Naive thymus-derived CD4-positive, alpha-beta T cell (primary cell): ENCODE measurements at regions of chr14 and their contacts with region 1.

Region 1: DNA sequence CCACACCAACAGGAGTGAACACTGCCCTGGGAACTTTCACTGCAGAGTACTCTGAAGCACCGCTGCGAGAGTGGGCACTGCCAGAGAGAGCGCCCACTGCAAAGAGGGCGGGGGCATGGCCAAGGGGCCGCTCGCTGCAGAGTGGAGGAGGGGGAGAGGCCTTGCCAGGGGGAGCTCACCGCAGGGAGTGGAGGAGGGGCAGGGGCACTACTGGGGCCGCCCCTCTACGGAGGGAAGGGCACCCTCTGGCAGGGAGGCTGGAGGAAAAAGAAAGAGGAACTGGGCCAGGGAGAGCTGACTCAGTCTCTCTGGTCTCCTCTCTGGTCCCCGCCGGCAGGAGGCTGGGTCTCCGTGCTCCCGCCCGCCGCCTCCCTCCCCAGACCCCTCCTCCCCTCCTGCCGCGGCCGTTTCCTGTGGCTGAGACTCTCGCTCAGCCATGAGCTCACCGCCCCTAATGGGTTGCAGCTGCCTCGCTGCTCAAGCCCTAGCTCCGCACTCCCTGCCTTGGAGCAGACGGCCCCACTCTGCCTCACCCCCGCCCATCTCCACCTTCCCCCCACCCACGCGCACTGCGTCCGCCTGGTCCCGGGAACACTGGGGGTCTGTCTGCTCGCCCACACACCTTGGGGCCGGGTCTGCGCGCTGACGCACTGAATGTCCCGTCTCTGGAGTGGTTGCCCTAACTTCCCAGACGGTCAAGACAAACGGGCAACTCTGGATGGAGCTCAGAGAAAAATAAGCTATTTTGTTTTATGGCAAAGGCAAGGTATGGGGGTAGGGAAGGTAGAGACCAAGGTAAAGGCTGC is 1.3 kb downstream of the ARHGEF40 start:
- DNase-seq: peak in 1 of 9 donors; percentile 36
- ATAC-seq: peak; percentile 63
- H3K4me3 ChIP-seq: peak overlapping the region; percentile 43
- H3K4me3 Mint-ChIP-seq: peak overlapping the region; percentile 69 to 90 (median 82)
- H3K27ac ChIP-seq: no peak overlapping the region
- H3K27ac Mint-ChIP-seq: peak overlapping the region in 5 of 9 donors; percentile 51 to 76 (median 54)
- H3K4me1 ChIP-seq: peaks cover 21 to 29% of the 10 kb centered on the region in 2 donors
- H3K4me1 Mint-ChIP-seq: peaks cover 23 to 40% (median 35%) of the 10 kb centered on the region in 7 donors
- H3K27me3 ChIP-seq: peaks cover 20 to 36% of the 10 kb centered on the region in 2 donors
- H3K27me3 Mint-ChIP-seq: peaks cover 51 to 69% (median 61%) of the 10 kb centered on the region in 5 donors

Region 2: GRCh38 chr14:20989572-20990551 is 81.6 kb before region 1 on chr14 and contains the start of gene METTL17:
- CTCF ChIA-PET with region 1: no interaction called
- POLR2A ChIA-PET with region 1: no interaction called
- intact Hi-C with region 1: no loop called
- DNase-seq: peak; percentile 64 to 88 (median 81)
- ATAC-seq: peak; percentile 95
- H3K4me3 ChIP-seq: peak within 1 kb of the TSS; percentile 86
- H3K4me3 Mint-ChIP-seq: peak within 1 kb of the TSS; percentile 86 to 97 (median 92)
- H3K27ac ChIP-seq: peak within 1 kb of the TSS; percentile 77
- H3K27ac Mint-ChIP-seq: peak within 1 kb of the TSS; percentile 86 to 98 (median 95)
- H3K4me1 ChIP-seq: peaks cover 12 to 16% of the 10 kb centered on the region in 2 donors
- H3K4me1 Mint-ChIP-seq: peaks cover 0 to 46% (median 37%) of the 10 kb centered on the region in 7 donors
- H3K27me3 ChIP-seq: no peaks in the 10 kb centered on the region
- H3K27me3 Mint-ChIP-seq: no peaks in the 10 kb centered on the region
- total RNA-seq, gene METTL17: 75.4 to 129 (median 96.7) TPM

Region 3: DNA sequence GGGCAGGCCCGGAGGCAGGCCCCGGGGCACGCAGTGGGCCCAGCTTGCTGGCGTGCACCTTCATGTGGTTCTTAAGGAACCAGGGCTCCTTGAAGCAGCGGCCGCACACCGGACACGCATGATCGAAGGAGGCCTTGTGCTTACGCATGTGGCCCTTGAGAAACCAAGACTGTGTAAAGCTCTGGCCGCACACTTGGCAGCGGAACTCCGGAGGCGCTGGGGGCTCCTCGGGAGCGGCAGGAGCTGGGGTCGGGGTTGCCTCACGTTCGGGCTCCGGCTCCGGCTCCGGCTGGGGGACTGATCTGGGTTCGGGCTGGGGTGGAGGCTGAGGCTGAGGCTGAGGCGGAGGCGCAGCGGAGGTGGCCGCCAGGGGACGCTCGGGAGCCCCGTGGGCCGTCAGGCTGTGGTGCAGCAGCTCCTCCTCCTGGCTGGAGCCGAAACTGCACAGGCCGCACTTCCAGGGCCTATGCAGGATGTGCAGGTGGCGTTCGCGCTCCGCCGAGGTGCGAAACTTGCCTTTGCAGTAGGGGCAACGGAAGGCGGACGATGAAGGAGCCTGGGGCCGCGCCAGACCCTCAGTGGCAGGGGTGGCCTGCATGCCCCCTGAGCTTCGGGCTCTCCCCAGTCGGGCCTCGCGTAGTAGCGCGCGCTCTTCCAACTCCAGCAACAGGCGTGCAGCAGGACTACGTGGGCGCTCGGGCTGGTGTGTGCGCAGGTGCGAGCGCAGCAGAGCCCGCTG is 21.0 kb after region 1 on chr14:
- CTCF ChIA-PET with region 1: interaction called, 8 read pairs
- POLR2A ChIA-PET with region 1: interaction called, 5 read pairs
- intact Hi-C with region 1: loop called (anchors 1 kb)
- DNase-seq: peak; percentile 82 to 98 (median 93)
- ATAC-seq: peak; percentile 90
- H3K4me3 ChIP-seq: no peak overlapping the region
- H3K4me3 Mint-ChIP-seq: peak overlapping the region in 1 of 10 donors; percentile 6
- H3K27ac ChIP-seq: no peak overlapping the region
- H3K27ac Mint-ChIP-seq: peak overlapping the region in 8 of 9 donors; percentile 17 to 88 (median 78)
- H3K4me1 ChIP-seq: peaks cover 6 to 14% of the 10 kb centered on the region in 2 donors
- H3K4me1 Mint-ChIP-seq: peaks cover 15 to 37% (median 27%) of the 10 kb centered on the region in 7 donors
- H3K27me3 ChIP-seq: no peaks in the 10 kb centered on the region
- H3K27me3 Mint-ChIP-seq: peaks cover 0 to 17% (median 0%) of the 10 kb centered on the region in 5 donors

Region 4: DNA sequence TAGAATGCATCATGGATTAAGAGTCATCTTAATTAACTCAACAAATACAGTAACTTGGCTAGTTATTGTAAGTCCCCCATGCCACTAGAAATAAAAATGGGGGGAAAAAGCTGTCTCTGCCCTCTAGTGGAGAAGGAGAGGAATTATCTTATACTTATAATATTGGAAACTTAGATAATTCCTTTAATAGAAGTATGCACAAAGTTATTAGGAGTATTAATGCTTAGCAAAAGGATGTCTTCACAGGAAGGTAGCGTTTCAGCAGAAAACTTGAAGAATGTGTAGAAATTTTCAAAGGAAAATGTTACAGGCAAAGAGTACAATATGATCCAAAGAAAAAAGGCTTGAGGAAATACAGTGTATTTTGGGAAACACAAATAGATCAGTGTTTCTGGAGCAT is 64.6 kb after region 1 on chr14:
- CTCF ChIA-PET with region 1: no interaction called
- POLR2A ChIA-PET with region 1: no interaction called
- intact Hi-C with region 1: loop called in 1 of 2 experiments (anchors 2 kb)
- DNase-seq: peak in 5 of 9 donors; percentile 1 to 22 (median 14)
- ATAC-seq: no peak
- H3K4me3 ChIP-seq: no peak overlapping the region
- H3K4me3 Mint-ChIP-seq: no peak overlapping the region
- H3K27ac ChIP-seq: no peak overlapping the region
- H3K27ac Mint-ChIP-seq: no peak overlapping the region
- H3K4me1 ChIP-seq: no peaks in the 10 kb centered on the region
- H3K4me1 Mint-ChIP-seq: no peaks in the 10 kb centered on the region
- H3K27me3 ChIP-seq: no peaks in the 10 kb centered on the region
- H3K27me3 Mint-ChIP-seq: peaks cover 0 to 8% (median 0%) of the 10 kb centered on the region in 5 donors

Region 5: DNA sequence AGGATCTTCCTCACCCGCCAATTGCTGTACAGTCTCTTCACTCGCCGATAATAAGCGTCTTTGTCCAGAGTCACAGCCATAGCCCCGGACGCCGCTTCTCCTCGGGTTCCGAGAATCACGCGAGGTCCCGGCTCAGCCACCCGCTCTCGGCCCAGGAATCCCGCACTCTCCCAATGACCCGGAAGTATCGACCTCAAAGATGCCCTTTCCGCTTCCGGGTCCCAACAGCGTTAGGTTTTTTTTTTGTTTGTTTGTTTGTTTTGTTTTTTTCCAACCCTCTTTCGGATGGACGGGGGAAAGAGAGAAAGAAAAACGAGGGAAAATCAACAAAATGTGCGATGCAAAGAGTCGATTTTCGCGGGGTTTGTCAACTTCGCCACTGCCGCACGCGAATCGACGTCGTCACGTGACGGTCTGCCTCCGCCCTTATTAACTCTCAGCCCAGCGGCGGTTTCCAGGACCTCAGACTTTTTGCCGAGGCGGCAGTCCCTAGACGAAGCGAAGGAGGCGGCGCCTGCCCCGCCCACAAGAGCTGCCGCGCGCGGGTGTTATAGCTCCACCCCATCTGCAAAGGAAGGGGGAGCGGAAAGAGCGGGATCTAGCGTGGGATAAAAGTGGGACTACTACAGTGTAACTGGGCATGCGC is 312.5 kb after region 1 on chr14 and contains the start of gene SUPT16H:
- CTCF ChIA-PET with region 1: no interaction called
- POLR2A ChIA-PET with region 1: no interaction called
- intact Hi-C with region 1: no loop called
- DNase-seq: peak; percentile 78 to 91 (median 86)
- ATAC-seq: peak; percentile 97
- H3K4me3 ChIP-seq: peak within 1 kb of the TSS; percentile 98
- H3K4me3 Mint-ChIP-seq: peak within 1 kb of the TSS; percentile 92 to 99 (median 97)
- H3K27ac ChIP-seq: peak within 1 kb of the TSS; percentile 87
- H3K27ac Mint-ChIP-seq: peak within 1 kb of the TSS; percentile 97 to 100 (median 99)
- H3K4me1 ChIP-seq: peaks cover 3 to 11% of the 10 kb centered on the region in 2 donors
- H3K4me1 Mint-ChIP-seq: peaks cover 26 to 52% (median 45%) of the 10 kb centered on the region in 7 donors
- H3K27me3 ChIP-seq: no peaks in the 10 kb centered on the region
- H3K27me3 Mint-ChIP-seq: no peaks in the 10 kb centered on the region
- total RNA-seq, gene SUPT16H: 46.1 to 104 (median 78.6) TPM

Region 6: DNA sequence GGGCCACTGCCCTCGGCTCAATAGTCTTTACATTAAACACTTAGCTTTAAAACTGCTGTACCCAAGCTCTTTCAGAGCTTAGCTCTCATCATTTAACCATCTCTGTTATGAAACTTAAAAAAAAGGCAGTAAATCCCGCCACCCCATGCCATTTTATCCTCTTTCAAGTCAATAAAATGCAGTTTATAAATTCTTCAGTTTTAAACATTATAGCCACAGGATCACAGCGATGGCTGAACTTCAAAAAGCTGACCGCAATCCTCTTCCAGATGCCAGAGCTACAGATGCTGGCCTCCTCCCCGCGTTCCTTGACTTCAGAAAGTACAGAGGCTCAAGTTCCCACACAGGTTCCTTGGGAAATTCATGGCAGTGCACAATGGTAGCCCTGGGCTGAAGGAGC is 504.2 kb after region 1 on chr14:
- CTCF ChIA-PET with region 1: no interaction called
- POLR2A ChIA-PET with region 1: no interaction called
- intact Hi-C with region 1: no loop called
- DNase-seq: no peak
- ATAC-seq: no peak
- H3K4me3 ChIP-seq: no peak overlapping the region
- H3K4me3 Mint-ChIP-seq: no peak overlapping the region
- H3K27ac ChIP-seq: no peak overlapping the region
- H3K27ac Mint-ChIP-seq: no peak overlapping the region
- H3K4me1 ChIP-seq: no peaks in the 10 kb centered on the region
- H3K4me1 Mint-ChIP-seq: no peaks in the 10 kb centered on the region
- H3K27me3 ChIP-seq: no peaks in the 10 kb centered on the region
- H3K27me3 Mint-ChIP-seq: peaks cover 0 to 17% (median 12%) of the 10 kb centered on the region in 5 donors